Thyroid gland (tissue), 4 donors: ENCODE measurements at regions of chr1 and their contacts with region 1.

Region 1: GRCh38 chr1:116853670-116854402 is 55.9 kb upstream of the PTGFRN start:
- DNase-seq: no peak
- H3K4me3 ChIP-seq: no peak overlapping the region
- H3K27ac ChIP-seq: no peak overlapping the region
- H3K4me1 ChIP-seq: peaks cover 0 to 13% of the 10 kb centered on the region in 2 donors
- H3K27me3 ChIP-seq: no peaks in the 10 kb centered on the region
- CTCF ChIP-seq: no peak
- POLR2A ChIP-seq: no peak

Region 2: DNA sequence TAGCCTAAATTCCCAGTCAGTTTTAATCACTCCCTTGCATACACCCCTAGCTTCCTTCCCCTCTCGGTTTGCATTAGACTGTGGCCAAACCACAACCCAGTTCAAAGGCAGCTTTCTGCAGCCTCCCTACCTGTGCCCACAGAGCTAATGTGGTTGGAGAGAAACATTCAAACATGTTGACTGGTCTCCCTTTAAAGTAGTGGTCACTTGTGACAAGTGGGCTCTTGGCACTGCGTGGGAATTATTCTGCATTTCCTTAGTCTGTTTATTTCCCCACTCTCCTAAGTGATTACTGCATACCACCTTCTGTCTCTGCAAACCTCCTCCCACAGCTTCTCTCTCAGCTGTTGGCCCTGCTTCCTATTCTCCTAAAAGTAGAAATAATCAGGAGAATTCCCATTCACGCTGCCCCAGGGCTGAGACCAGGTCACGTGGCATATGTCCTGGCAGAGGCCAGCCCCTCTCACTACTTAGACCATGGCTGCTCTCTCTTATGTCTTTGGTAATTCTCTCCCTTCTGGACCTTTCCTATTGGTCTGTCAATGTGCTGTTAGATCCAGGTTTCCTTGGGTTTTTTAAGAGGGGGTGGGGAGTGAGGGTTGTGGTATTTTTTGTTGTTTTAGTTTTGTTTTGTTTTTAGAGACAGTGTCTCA is 109.3 kb after region 1 on chr1:
- intact Hi-C with region 1: no loop called
- DNase-seq: no peak
- H3K4me3 ChIP-seq: no peak overlapping the region
- H3K27ac ChIP-seq: no peak overlapping the region
- H3K4me1 ChIP-seq: no peaks in the 10 kb centered on the region
- H3K27me3 ChIP-seq: no peaks in the 10 kb centered on the region
- CTCF ChIP-seq: no peak
- POLR2A ChIP-seq: no peak

Region 3: GRCh38 chr1:117045644-117046043 is 191.8 kb after region 1 on chr1:
- intact Hi-C with region 1: loop called (anchors 10 kb)
- DNase-seq: no peak
- H3K4me3 ChIP-seq: no peak overlapping the region
- H3K27ac ChIP-seq: no peak overlapping the region
- H3K4me1 ChIP-seq: peaks cover 8 to 13% of the 10 kb centered on the region in 2 donors
- H3K27me3 ChIP-seq: no peaks in the 10 kb centered on the region
- CTCF ChIP-seq: no peak
- POLR2A ChIP-seq: no peak